ENCODE measurements at regions of chr2 and their contacts with region 1.

Region 1: DNA sequence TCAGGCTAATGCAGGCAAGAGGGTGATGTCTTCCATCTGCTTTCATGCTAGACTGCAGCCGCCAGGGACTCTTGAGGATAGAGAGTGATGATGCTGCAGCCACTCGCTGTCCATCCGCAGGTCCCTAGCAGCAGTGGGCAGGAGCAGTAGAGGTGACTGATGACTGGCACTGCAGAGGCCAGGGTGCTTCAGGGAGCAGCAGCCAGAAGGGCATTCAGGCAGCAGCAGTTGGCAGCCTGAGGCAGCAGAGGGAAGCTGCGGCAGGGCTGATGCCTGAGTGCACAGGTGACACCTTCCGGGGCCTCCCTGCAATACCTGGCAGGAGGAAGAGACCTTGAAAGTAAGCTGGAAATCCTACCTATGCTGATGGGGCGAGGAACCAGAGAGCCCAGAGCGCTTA is 214.2 kb downstream of the ICOS start:
- DNase-seq: no peak
- H3K4me3 ChIP-seq: no peak overlapping the region
- H3K4me3 Mint-ChIP-seq: no peak overlapping the region
- H3K27ac ChIP-seq: no peak overlapping the region
- H3K27ac Mint-ChIP-seq: no peak overlapping the region
- H3K4me1 ChIP-seq: peaks cover 5% of the 10 kb centered on the region
- H3K4me1 Mint-ChIP-seq: peaks cover 0 to 4% (median 4%) of the 10 kb centered on the region in 4 donors
- H3K27me3 ChIP-seq: no peaks in the 10 kb centered on the region
- H3K27me3 Mint-ChIP-seq: peaks cover 6 to 20% of the 10 kb centered on the region in 2 donors

Region 2: GRCh38 chr2:204140246-204140645 is 10.5 kb before region 1 on chr2:
- CTCF ChIA-PET with region 1: interaction called, 24 read pairs
- POLR2A ChIA-PET with region 1: no interaction called
- intact Hi-C with region 1: no loop called
- DNase-seq: no peak
- H3K4me3 ChIP-seq: no peak overlapping the region
- H3K4me3 Mint-ChIP-seq: no peak overlapping the region
- H3K27ac ChIP-seq: no peak overlapping the region
- H3K27ac Mint-ChIP-seq: no peak overlapping the region
- H3K4me1 ChIP-seq: peaks cover 2% of the 10 kb centered on the region
- H3K4me1 Mint-ChIP-seq: peaks cover 0 to 3% (median 1%) of the 10 kb centered on the region in 4 donors
- H3K27me3 ChIP-seq: no peaks in the 10 kb centered on the region
- H3K27me3 Mint-ChIP-seq: peaks cover 0 to 5% of the 10 kb centered on the region in 2 donors